CD8-positive, alpha-beta T cell (primary cell): ENCODE measurements at regions of chr11 and their contacts with region 1.

Region 1: GRCh38 chr11:74702383-74703007 is 28.7 kb downstream of the CHRDL2 start:
- DNase-seq: peak; percentile 26 to 68 (median 55)
- ATAC-seq: peak; percentile 82
- H3K4me3 ChIP-seq: no peak overlapping the region
- H3K4me3 Mint-ChIP-seq: no peak overlapping the region
- H3K27ac ChIP-seq: no peak overlapping the region
- H3K27ac Mint-ChIP-seq: no peak overlapping the region
- H3K4me1 ChIP-seq: no peaks in the 10 kb centered on the region
- H3K4me1 Mint-ChIP-seq: peaks cover under 1% of the 10 kb centered on the region
- H3K27me3 ChIP-seq: peaks cover 0 to 2% of the 10 kb centered on the region in 2 experiments
- H3K27me3 Mint-ChIP-seq: peaks cover 4% of the 10 kb centered on the region
- CTCF ChIP-seq: peak; percentile 89

Region 2: DNA sequence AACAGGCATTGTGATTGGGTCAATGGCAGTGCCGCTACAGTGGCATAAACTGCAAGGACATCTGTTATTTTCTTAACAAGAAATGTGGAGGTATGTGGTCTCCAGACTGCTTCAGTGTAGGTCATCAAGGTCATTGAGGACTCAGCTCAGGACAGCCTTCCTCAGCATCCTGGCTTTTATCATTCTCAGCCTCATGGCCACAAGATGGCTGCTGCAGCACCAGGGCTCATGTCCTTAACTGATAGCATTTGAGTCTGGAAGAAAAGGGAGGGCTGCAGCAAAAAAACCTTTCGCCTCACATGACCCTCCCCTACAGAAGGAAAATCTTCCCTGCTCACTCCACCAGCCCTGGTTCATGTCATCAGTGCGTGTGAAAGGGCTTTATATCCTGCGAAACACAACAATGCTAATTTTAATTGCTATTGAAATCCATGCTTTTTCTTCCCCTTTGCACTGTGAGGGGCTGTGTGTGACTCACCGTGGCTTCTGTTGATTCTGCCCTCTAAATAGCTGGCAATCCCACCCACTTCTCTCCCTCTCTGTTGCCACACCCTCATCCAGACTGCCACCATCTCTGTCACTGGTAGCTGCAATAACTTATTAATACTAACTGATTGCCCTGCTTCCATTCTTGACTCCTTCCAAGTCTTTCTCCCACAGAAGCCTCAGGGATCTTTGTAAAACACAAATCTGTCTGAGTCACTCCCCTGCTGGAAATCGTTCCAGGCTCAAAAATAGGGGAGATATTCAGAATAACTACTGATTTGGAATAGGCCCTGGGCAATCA is 15.1 kb before region 1 on chr11:
- CTCF ChIA-PET with region 1: interaction called, 17 read pairs
- POLR2A ChIA-PET with region 1: no interaction called
- intact Hi-C with region 1: no loop called
- DNase-seq: no peak
- ATAC-seq: no peak
- H3K4me3 ChIP-seq: no peak overlapping the region
- H3K4me3 Mint-ChIP-seq: no peak overlapping the region
- H3K27ac ChIP-seq: no peak overlapping the region
- H3K27ac Mint-ChIP-seq: no peak overlapping the region
- H3K4me1 ChIP-seq: no peaks in the 10 kb centered on the region
- H3K4me1 Mint-ChIP-seq: peaks cover 2% of the 10 kb centered on the region
- H3K27me3 ChIP-seq: peaks cover 0 to 3% of the 10 kb centered on the region in 2 experiments
- H3K27me3 Mint-ChIP-seq: peaks cover 12% of the 10 kb centered on the region
- CTCF ChIP-seq: no peak

Region 3: DNA sequence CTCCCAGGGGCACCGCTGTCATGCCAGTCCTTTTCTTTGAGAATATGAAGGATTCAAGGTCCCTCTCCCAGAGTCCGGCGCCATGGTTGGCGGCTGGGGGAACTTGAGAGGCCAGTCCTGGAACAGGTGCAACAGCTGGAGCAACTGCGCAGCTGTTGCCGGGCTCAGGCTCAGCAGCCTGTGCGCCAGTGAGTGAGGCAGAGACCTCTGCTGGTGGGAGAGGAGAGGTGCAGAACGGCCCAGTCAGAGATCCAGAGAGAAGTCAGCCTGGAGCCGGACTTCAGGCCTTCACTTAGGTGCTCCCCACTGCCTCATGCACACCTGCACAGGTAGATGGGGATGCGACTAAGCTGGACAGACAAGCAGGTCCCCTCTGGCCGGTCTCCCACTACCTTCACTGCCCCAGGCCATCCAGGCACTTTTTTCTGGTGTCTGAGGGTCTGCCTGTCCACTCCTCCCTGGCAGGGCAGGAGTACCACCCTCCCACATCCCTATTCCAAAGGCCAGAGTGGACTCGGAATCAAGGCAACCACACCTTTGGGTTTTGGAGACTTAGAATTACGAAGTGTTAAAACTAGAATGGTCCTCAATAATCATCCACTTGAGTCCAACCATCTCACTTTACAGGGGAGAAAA is 24.2 kb after region 1 on chr11:
- CTCF ChIA-PET with region 1: interaction called, 59 read pairs
- POLR2A ChIA-PET with region 1: no interaction called
- intact Hi-C with region 1: loop called in 1 of 2 experiments (anchors 1 kb)
- DNase-seq: peak; percentile 25 to 72 (median 54)
- ATAC-seq: peak; percentile 96
- H3K4me3 ChIP-seq: no peak overlapping the region
- H3K4me3 Mint-ChIP-seq: no peak overlapping the region
- H3K27ac ChIP-seq: no peak overlapping the region
- H3K27ac Mint-ChIP-seq: no peak overlapping the region
- H3K4me1 ChIP-seq: peaks cover 3% of the 10 kb centered on the region
- H3K4me1 Mint-ChIP-seq: peaks cover 9% of the 10 kb centered on the region
- H3K27me3 ChIP-seq: peaks cover 0 to 3% of the 10 kb centered on the region in 2 experiments
- H3K27me3 Mint-ChIP-seq: peaks cover 27% of the 10 kb centered on the region
- CTCF ChIP-seq: peak; percentile 87

Region 4: GRCh38 chr11:74739546-74740270 is 37.2 kb after region 1 on chr11:
- CTCF ChIA-PET with region 1: interaction called, 13 read pairs
- POLR2A ChIA-PET with region 1: no interaction called
- intact Hi-C with region 1: loop called in 1 of 2 experiments (anchors 1 kb)
- DNase-seq: peak in 7 of 9 experiments; percentile 17 to 75 (median 51)
- ATAC-seq: peak; percentile 90
- H3K4me3 ChIP-seq: no peak overlapping the region
- H3K4me3 Mint-ChIP-seq: no peak overlapping the region
- H3K27ac ChIP-seq: no peak overlapping the region
- H3K27ac Mint-ChIP-seq: no peak overlapping the region
- H3K4me1 ChIP-seq: peaks cover 6% of the 10 kb centered on the region
- H3K4me1 Mint-ChIP-seq: peaks cover 5% of the 10 kb centered on the region
- H3K27me3 ChIP-seq: no peaks in the 10 kb centered on the region
- H3K27me3 Mint-ChIP-seq: peaks cover 25% of the 10 kb centered on the region
- CTCF ChIP-seq: peak; percentile 94

Region 5: GRCh38 chr11:74870485-74870884 is 168.0 kb after region 1 on chr11:
- CTCF ChIA-PET with region 1: no interaction called
- POLR2A ChIA-PET with region 1: no interaction called
- intact Hi-C with region 1: loop called in 1 of 2 experiments (anchors 5 kb)
- DNase-seq: peak in 2 of 9 experiments; percentile 11 to 50
- ATAC-seq: no peak
- H3K4me3 ChIP-seq: no peak overlapping the region
- H3K4me3 Mint-ChIP-seq: no peak overlapping the region
- H3K27ac ChIP-seq: no peak overlapping the region
- H3K27ac Mint-ChIP-seq: no peak overlapping the region
- H3K4me1 ChIP-seq: no peaks in the 10 kb centered on the region
- H3K4me1 Mint-ChIP-seq: no peaks in the 10 kb centered on the region
- H3K27me3 ChIP-seq: no peaks in the 10 kb centered on the region
- H3K27me3 Mint-ChIP-seq: no peaks in the 10 kb centered on the region
- CTCF ChIP-seq: no peak